ENCODE measurements at regions of chr1 and their contacts with region 1.

Region 1: DNA sequence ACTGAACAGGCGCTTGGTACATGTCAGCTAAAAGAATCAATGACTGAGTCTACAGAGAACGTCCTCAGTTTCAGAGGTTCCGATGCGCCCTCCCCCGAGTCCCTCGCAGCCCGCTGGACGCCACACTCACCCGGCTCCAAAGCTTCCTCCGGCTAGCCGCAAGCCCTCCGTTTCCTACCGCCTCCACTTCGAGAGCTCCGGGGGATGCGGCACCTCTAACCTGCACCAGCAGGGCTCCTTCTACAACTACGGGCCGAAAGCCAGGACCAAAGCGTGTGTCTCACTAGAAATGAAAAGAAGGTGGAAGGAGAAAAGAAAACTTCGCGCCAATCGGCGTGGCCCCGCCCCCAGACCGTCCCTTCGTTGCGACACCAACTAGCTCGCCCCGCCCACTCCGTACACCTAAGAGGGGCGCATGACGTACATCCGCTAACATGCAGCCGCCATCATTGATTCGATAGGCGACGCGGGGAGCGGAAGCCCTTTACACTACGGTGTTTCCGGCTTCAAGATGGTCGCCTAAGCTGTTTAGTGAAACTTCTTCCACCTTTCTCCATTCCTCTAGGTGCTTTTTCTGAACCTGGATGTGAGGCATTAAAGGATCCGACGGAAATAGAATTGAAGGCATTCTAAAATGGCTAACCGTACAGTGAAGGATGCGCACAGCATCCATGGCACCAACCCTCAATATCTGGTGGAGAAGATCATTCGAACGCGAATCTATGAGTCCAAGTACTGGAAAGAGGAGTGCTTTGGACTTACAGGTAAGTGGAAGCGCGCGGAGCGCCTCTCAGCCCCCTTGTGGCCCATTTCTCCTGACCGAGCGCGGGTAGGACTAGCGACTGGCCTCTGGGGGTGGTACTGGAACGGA is at the starts of genes ORC1 and PRPF38A:
- DNase-seq: peak; percentile 100
- H3K4me3 ChIP-seq: peak within 1 kb of the TSS; percentile 85
- H3K27ac ChIP-seq: peak within 1 kb of the TSS; percentile 83
- H3K4me1 ChIP-seq: peaks cover 26% of the 10 kb centered on the region
- CTCF ChIP-seq: peak; percentile 80
- total RNA-seq, gene ORC1: 30.9 and 37.7 TPM in 2 replicates
- total RNA-seq, gene PRPF38A: 23.6 and 31.8 TPM in 2 replicates

Region 2: DNA sequence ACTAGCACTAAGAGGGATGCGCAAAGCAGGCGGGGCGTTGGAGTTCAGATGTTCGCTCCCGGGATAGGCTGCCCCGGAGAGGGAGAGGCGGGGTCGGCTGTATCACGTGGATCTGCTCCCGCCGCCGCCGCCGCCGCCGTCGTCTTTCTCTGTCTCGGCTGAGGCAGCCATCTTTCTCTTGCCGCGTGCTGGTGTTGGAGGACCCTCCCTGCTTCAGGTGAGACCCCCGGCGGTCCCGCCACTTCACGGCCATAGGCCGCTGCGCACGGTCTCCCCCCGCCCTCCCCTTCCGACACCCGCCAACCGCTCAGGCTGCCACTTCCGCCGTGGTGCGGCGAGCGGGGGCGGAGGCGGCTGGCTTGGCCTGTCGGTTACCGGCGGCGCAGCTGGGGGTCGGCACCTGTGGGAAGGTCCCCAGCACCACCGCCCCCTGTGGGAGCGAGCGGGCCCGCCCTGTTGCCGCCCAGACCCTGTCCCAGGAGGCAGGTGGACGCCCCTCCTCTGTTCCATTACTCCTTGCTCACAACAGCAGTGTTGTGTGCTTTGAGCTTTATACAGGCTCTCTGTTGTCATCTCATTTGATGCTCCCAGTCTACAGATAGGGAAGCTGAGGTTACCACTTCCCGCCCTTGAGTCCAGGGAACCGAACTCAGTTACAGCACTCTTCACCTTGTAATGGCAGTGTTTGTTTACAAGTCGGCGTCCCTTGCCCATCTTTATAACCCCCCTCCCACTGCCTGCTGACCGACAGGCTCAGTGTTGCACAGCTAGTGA is 348.0 kb before region 1 on chr1 and contains the start of gene BTF3L4:
- CTCF ChIA-PET with region 1: no interaction called
- POLR2A ChIA-PET with region 1: no interaction called
- intact Hi-C with region 1: loop called (anchors 2 kb)
- DNase-seq: peak; percentile 95
- H3K4me3 ChIP-seq: peak within 1 kb of the TSS; percentile 96
- H3K27ac ChIP-seq: peak within 1 kb of the TSS; percentile 80
- H3K4me1 ChIP-seq: peaks cover 38% of the 10 kb centered on the region
- CTCF ChIP-seq: peak; percentile 26; the same call in 1 of the 2 replicates
- total RNA-seq, gene BTF3L4: 25.5 and 27.4 TPM in 2 replicates

Region 3: DNA sequence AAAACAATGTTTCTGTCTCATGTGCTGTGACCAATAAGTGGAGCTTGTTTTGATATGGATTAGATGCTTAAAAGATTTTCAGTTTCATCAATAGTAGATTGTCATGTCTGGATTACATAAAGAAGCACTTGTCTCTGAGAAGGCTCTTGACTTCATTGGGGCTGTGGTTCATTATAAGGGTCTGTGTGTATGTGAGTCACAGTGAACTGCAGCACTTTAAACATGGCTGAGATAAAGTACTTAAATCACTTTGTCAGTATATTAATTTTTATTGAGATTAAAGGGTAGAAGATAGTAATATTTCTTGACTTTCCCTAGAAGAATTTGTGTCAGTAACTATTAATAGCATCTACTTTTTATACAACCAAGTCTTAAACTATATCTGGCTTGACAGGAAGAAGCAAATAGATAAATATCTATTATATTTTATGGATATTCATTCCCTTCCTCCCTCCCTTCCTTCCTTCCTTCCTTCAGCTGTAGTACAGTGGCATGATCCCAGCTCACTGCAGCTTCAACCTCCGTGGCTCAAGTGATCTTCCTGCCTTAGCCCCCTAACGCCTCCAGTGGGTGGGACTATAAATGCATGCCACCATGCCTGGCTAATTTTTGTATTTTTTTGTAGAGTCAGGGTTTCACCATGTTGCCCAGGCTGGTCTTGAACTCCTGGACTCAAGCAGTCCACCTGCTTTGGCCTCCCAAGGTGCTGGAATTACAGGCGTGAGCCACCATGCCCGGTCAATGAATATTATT is 213.7 kb before region 1 on chr1:
- CTCF ChIA-PET with region 1: no interaction called
- POLR2A ChIA-PET with region 1: no interaction called
- intact Hi-C with region 1: no loop called
- DNase-seq: no peak
- H3K4me3 ChIP-seq: no peak overlapping the region
- H3K27ac ChIP-seq: no peak overlapping the region
- H3K4me1 ChIP-seq: no peaks in the 10 kb centered on the region
- CTCF ChIP-seq: no peak

Region 4: GRCh38 chr1:52365746-52366516 is 38.4 kb before region 1 on chr1 and contains the start of gene CC2D1B:
- CTCF ChIA-PET with region 1: no interaction called
- POLR2A ChIA-PET with region 1: interaction called, 15 read pairs
- intact Hi-C with region 1: loop called (anchors 1 kb)
- DNase-seq: peak; percentile 98
- H3K4me3 ChIP-seq: peak within 1 kb of the TSS; percentile 93
- H3K27ac ChIP-seq: peak within 1 kb of the TSS; percentile 63
- H3K4me1 ChIP-seq: peaks cover 15% of the 10 kb centered on the region
- CTCF ChIP-seq: no peak
- total RNA-seq, gene CC2D1B: 28.8 and 29.2 TPM in 2 replicates

Region 5: GRCh38 chr1:52444463-52444862 is 40.1 kb after region 1 on chr1:
- CTCF ChIA-PET with region 1: no interaction called
- POLR2A ChIA-PET with region 1: no interaction called
- intact Hi-C with region 1: no loop called
- DNase-seq: no peak
- H3K4me3 ChIP-seq: no peak overlapping the region
- H3K27ac ChIP-seq: no peak overlapping the region
- H3K4me1 ChIP-seq: no peaks in the 10 kb centered on the region
- CTCF ChIP-seq: no peak

Region 6: DNA sequence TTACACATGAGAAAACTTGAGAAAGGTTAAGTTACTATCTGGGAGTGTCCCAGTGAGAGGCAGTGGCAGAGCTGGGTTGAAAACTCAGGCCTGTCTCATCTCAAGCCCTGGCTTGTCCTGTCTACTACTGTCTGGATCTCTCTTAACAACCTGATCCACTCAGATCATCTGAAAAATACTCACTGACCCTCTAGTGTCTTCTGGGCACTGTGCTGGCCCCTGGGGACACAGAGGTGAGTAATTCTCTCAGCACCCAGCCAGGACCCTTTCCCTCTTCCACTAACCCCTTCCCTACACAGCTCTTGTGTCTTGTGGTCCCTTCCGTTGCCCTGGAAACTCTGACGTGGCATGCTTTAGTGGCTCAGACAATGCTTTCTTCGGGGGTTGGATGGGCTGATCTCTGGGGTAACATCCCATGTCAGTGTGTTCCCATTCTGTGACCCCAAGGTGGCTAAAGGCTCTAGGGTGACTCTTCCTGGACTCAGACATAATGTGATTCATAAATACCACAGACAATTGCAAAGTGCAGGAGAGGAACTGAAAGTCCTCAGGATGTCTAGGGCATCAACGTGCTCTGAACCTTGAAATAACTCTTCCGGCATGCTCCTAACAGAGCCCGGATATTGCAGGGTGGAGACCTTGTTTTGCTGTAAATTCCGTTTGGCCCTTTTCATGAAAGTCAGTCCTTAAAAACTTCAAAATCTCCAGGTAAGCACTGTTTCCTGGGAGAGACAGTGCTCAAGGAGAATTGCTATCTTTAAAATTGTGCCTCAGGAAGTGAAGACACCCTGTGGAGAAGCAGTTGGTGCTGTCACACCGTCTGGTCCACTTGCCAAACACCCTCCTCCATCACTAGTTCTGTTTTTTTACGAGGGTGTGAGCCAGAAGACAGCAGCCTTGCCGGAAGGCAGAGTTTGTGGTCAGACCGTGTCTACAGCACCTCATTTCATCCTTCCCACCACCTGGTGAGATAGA is 232.7 kb after region 1 on chr1:
- CTCF ChIA-PET with region 1: no interaction called
- POLR2A ChIA-PET with region 1: interaction called, 3 read pairs
- intact Hi-C with region 1: loop called (anchors 1 kb)
- DNase-seq: peak; percentile 96
- H3K4me3 ChIP-seq: peak overlapping the region; percentile 53
- H3K27ac ChIP-seq: peak overlapping the region; percentile 96
- H3K4me1 ChIP-seq: peaks cover 77% of the 10 kb centered on the region
- CTCF ChIP-seq: no peak

Region 7: GRCh38 chr1:52686830-52687229 is 282.5 kb after region 1 on chr1:
- CTCF ChIA-PET with region 1: no interaction called
- POLR2A ChIA-PET with region 1: interaction called, 3 read pairs
- intact Hi-C with region 1: loop called (anchors 2 kb)
- DNase-seq: no peak
- H3K4me3 ChIP-seq: no peak overlapping the region
- H3K27ac ChIP-seq: no peak overlapping the region
- H3K4me1 ChIP-seq: peaks cover 3% of the 10 kb centered on the region
- CTCF ChIP-seq: no peak

Measured in OCI-LY7 (cell line).